ENCODE measurements at regions of chr3 and their contacts with region 1.

Region 1: GRCh38 chr3:95673215-95673614 is 1141.2 kb upstream of the EPHA6 start:
- DNase-seq: no peak
- ATAC-seq: no peak
- H3K4me3 ChIP-seq: no peak overlapping the region
- H3K27ac ChIP-seq: no peak overlapping the region
- H3K4me1 ChIP-seq: no peaks in the 10 kb centered on the region
- H3K27me3 ChIP-seq: no peaks in the 10 kb centered on the region
- CTCF ChIP-seq: no peak

Region 2: GRCh38 chr3:95197616-95198015 is 475.6 kb before region 1 on chr3:
- CTCF ChIA-PET with region 1: no interaction called
- POLR2A ChIA-PET with region 1: no interaction called
- intact Hi-C with region 1: no loop called
- DNase-seq: no peak
- ATAC-seq: no peak
- H3K4me3 ChIP-seq: no peak overlapping the region
- H3K27ac ChIP-seq: no peak overlapping the region
- H3K4me1 ChIP-seq: no peaks in the 10 kb centered on the region
- H3K27me3 ChIP-seq: no peaks in the 10 kb centered on the region
- CTCF ChIP-seq: no peak

Region 3: GRCh38 chr3:95645291-95645690 is 27.9 kb before region 1 on chr3:
- CTCF ChIA-PET with region 1: interaction called, 13 read pairs
- POLR2A ChIA-PET with region 1: no interaction called
- intact Hi-C with region 1: no loop called
- DNase-seq: no peak
- ATAC-seq: no peak
- H3K4me3 ChIP-seq: no peak overlapping the region
- H3K27ac ChIP-seq: no peak overlapping the region
- H3K4me1 ChIP-seq: no peaks in the 10 kb centered on the region
- H3K27me3 ChIP-seq: no peaks in the 10 kb centered on the region
- CTCF ChIP-seq: no peak